CD8-positive, alpha-beta T cell (primary cell): ENCODE measurements at regions of chr19 and their contacts with region 1.

Region 1: DNA sequence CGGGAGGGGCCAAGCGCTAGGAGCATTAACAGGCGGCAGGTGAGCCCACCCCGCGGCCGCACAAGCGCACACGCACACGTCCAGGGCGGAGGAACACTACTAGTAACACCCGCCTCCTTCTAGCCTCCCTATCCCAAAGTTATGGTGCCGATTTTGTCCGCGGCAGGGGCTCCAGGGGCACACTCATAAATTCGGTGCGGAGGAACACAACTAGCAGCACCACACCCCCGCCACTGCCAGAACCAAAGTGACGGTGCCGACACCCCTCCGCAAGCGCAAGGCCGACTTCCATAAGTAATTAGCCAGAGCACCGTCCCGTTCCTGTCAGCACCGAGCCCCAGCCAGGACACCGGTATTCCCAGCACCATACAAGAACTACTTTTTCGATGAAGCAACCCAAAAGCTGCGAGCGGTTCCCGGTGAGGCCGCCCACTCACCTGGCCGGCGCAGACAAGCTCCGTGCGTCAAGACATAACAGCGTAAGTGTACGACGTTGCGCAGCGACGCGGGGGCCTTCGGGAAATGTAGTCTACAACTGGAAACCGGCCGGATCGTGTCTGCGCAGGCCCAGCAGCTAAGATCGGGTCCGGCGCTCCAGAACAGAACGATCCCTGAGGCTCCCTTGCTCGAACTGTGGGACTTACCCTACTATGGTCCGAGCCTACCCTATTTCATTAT is at the starts of genes ZNF540 and ZNF571:
- DNase-seq: peak; percentile 83 to 96 (median 93)
- ATAC-seq: peak; percentile 93
- H3K4me3 ChIP-seq: peak within 1 kb of the TSS; percentile 66 to 70
- H3K4me3 Mint-ChIP-seq: peak within 1 kb of the TSS; percentile 98
- H3K27ac ChIP-seq: peak within 1 kb of the TSS; percentile 84 to 97
- H3K27ac Mint-ChIP-seq: peak within 1 kb of the TSS; percentile 99
- H3K4me1 ChIP-seq: peaks cover 10% of the 10 kb centered on the region
- H3K4me1 Mint-ChIP-seq: peaks cover 31% of the 10 kb centered on the region
- H3K27me3 ChIP-seq: no peaks in the 10 kb centered on the region
- H3K27me3 Mint-ChIP-seq: no peaks in the 10 kb centered on the region
- CTCF ChIP-seq: no peak
- total RNA-seq, gene ZNF540: 17.8 to 20.1 TPM
- total RNA-seq, gene ZNF571: 30.5 to 30.8 TPM

Region 2: DNA sequence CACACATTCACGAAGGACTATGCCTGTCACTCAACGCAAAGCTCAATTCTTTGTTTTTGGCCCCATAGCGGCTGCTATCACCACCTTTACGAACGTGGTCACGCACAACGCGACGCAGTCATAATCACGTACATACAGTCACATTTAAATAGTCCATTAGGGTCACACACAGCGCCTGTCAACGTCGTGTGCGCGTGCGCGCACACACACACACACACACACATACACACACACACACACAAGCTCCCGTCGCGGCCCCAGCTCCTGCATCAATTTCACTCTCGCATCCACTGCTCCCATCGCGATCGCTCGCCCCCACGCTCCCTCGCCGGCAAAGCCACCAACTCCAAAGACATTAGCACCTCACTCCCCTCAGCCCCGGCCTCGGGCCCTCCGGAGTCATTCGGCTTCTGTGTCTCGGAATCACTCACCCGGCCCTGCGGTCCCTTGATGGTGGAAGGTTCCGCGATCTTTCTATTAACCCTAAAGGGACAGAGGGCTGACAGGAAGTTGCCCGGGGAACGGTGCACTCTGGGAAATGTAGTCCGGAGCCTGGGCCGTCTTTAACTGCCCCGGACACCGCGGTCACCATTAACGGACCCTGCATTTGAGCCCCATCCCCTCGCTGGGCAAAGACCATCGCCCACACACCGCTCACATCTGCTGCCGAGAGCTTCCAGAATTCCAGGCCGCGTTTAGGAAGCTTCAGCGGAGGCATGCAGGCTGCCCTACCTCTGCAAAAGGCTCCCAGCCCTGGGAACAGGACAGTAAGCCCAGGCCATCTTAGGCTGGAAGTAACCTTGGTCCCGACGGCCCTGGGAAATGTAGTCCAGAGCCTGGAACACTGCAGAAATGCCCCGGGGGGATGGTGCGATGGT is 756.3 kb before region 1 on chr19 and contains the start of gene ZNF790:
- CTCF ChIA-PET with region 1: no interaction called
- POLR2A ChIA-PET with region 1: interaction called, 5 read pairs
- intact Hi-C with region 1: loop called in 1 of 2 experiments (anchors 5 kb)
- DNase-seq: peak; percentile 62 to 92 (median 81)
- ATAC-seq: peak; percentile 87
- H3K4me3 ChIP-seq: peak within 1 kb of the TSS; percentile 86 to 91
- H3K4me3 Mint-ChIP-seq: no peak within 1 kb of the TSS
- H3K27ac ChIP-seq: peak within 1 kb of the TSS; percentile 88 to 97
- H3K27ac Mint-ChIP-seq: no peak within 1 kb of the TSS
- H3K4me1 ChIP-seq: peaks cover 17% of the 10 kb centered on the region
- H3K4me1 Mint-ChIP-seq: peaks cover 21% of the 10 kb centered on the region
- H3K27me3 ChIP-seq: no peaks in the 10 kb centered on the region
- H3K27me3 Mint-ChIP-seq: no peaks in the 10 kb centered on the region
- CTCF ChIP-seq: no peak
- total RNA-seq, gene ZNF790: 2.1 to 3.6 TPM

Region 3: GRCh38 chr19:37309834-37310575 is 284.4 kb before region 1 on chr19:
- CTCF ChIA-PET with region 1: no interaction called
- POLR2A ChIA-PET with region 1: no interaction called
- intact Hi-C with region 1: loop called in 1 of 2 experiments (anchors 10 kb)
- DNase-seq: peak in 4 of 9 experiments; percentile 27 to 64 (median 45)
- ATAC-seq: no peak
- H3K4me3 ChIP-seq: no peak overlapping the region
- H3K4me3 Mint-ChIP-seq: no peak overlapping the region
- H3K27ac ChIP-seq: no peak overlapping the region
- H3K27ac Mint-ChIP-seq: no peak overlapping the region
- H3K4me1 ChIP-seq: no peaks in the 10 kb centered on the region
- H3K4me1 Mint-ChIP-seq: peaks cover 16% of the 10 kb centered on the region
- H3K27me3 ChIP-seq: no peaks in the 10 kb centered on the region
- H3K27me3 Mint-ChIP-seq: peaks cover 4% of the 10 kb centered on the region
- CTCF ChIP-seq: peak; percentile 53

Region 4: GRCh38 chr19:37370880-37371661 is 223.4 kb before region 1 on chr19 and contains the start of gene ZNF527:
- CTCF ChIA-PET with region 1: no interaction called
- POLR2A ChIA-PET with region 1: interaction called, 14 read pairs
- intact Hi-C with region 1: loop called (anchors 1 kb)
- DNase-seq: peak; percentile 94 to 98 (median 97)
- ATAC-seq: peak; percentile 92
- H3K4me3 ChIP-seq: peak within 1 kb of the TSS; percentile 80 to 95
- H3K4me3 Mint-ChIP-seq: peak within 1 kb of the TSS; percentile 99
- H3K27ac ChIP-seq: peak within 1 kb of the TSS; percentile 82 to 90
- H3K27ac Mint-ChIP-seq: peak within 1 kb of the TSS; percentile 96
- H3K4me1 ChIP-seq: peaks cover 7% of the 10 kb centered on the region
- H3K4me1 Mint-ChIP-seq: peaks cover 20% of the 10 kb centered on the region
- H3K27me3 ChIP-seq: no peaks in the 10 kb centered on the region
- H3K27me3 Mint-ChIP-seq: no peaks in the 10 kb centered on the region
- CTCF ChIP-seq: no peak
- total RNA-seq, gene ZNF527: 12.9 to 14.2 TPM

Region 5: DNA sequence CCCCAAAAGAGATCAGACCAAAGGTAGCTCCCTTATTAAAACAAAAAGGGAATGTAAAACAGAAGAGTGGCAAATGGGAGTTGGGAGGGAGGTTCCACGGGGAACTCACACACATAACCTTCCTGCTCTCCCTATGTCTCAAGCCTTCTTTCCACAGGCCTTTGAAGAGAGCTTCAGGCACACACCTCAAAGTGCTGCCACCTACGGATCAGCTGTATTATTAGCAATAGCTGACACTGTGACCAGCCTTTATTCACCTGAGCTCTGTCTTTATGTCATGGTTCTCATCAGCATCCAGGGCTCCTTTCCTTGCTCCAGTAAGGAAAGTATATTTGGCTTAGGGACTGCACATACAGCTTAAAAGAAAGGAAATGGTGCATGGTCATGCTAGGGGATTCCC is 11.1 kb before region 1 on chr19:
- CTCF ChIA-PET with region 1: interaction called, 3 read pairs
- POLR2A ChIA-PET with region 1: interaction called, 11 read pairs
- intact Hi-C with region 1: no loop called
- DNase-seq: no peak
- ATAC-seq: no peak
- H3K4me3 ChIP-seq: no peak overlapping the region
- H3K4me3 Mint-ChIP-seq: no peak overlapping the region
- H3K27ac ChIP-seq: no peak overlapping the region
- H3K27ac Mint-ChIP-seq: no peak overlapping the region
- H3K4me1 ChIP-seq: no peaks in the 10 kb centered on the region
- H3K4me1 Mint-ChIP-seq: no peaks in the 10 kb centered on the region
- H3K27me3 ChIP-seq: no peaks in the 10 kb centered on the region
- H3K27me3 Mint-ChIP-seq: no peaks in the 10 kb centered on the region
- CTCF ChIP-seq: no peak

Region 6: GRCh38 chr19:37635076-37636056 is 40.9 kb after region 1 on chr19:
- CTCF ChIA-PET with region 1: no interaction called
- POLR2A ChIA-PET with region 1: no interaction called
- intact Hi-C with region 1: no loop called
- DNase-seq: no peak
- ATAC-seq: no peak
- H3K4me3 ChIP-seq: no peak overlapping the region
- H3K4me3 Mint-ChIP-seq: no peak overlapping the region
- H3K27ac ChIP-seq: no peak overlapping the region
- H3K27ac Mint-ChIP-seq: no peak overlapping the region
- H3K4me1 ChIP-seq: no peaks in the 10 kb centered on the region
- H3K4me1 Mint-ChIP-seq: no peaks in the 10 kb centered on the region
- H3K27me3 ChIP-seq: no peaks in the 10 kb centered on the region
- H3K27me3 Mint-ChIP-seq: no peaks in the 10 kb centered on the region
- CTCF ChIP-seq: no peak

Region 7: GRCh38 chr19:37691881-37692504 is 97.5 kb after region 1 on chr19:
- CTCF ChIA-PET with region 1: no interaction called
- POLR2A ChIA-PET with region 1: interaction called, 13 read pairs
- intact Hi-C with region 1: loop called in 1 of 2 experiments (anchors 1 kb)
- DNase-seq: peak; percentile 54 to 90 (median 80)
- ATAC-seq: peak; percentile 92
- H3K4me3 ChIP-seq: peak overlapping the region; percentile 58 to 73
- H3K4me3 Mint-ChIP-seq: peak overlapping the region; percentile 96
- H3K27ac ChIP-seq: peak overlapping the region; percentile 65 to 74
- H3K27ac Mint-ChIP-seq: peak overlapping the region; percentile 96
- H3K4me1 ChIP-seq: no peaks in the 10 kb centered on the region
- H3K4me1 Mint-ChIP-seq: peaks cover 13% of the 10 kb centered on the region
- H3K27me3 ChIP-seq: no peaks in the 10 kb centered on the region
- H3K27me3 Mint-ChIP-seq: no peaks in the 10 kb centered on the region
- CTCF ChIP-seq: no peak

Region 8: DNA sequence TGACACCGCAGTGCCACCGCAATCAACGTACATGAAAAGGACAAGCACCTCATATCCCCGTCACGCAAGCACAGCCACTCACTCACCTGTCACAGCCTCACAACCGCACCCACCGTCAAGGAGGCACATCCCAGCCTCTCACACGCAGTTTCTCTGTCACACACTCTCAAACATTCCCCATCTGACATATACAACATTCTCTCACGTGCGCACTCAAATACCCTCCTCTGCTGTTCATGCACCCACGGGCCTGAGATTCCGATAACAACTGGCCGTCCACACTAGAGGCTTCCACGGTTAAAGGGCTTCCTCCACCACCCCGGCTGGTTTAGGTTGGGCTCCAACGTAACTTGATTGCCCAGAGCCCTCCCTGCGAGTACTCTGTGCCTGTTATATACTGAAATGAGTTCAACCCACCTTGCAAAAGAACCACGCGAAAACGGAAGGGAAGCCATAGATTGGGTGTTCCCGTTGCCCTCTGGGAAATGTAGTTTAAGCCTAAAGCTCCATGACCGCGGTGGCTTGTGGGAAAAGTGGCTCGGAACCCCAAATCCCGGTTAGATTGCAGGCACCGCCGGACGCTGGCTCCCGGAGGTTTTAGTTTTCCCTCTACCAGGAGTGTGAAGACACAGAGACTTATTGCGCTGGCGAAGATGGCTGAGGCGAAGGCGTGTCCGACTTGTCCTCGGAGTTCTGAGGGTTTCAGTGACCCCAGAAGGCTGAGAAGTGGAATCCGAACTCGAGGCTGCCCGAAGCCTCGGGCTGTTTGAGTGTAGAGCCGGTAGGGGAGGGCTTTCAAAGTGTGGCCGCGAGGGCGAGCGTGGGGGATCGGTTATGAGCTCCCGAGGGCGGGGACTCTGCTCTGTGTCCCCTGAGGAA is 184.9 kb after region 1 on chr19 and contains the start of gene ZNF573:
- CTCF ChIA-PET with region 1: no interaction called
- POLR2A ChIA-PET with region 1: interaction called, 8 read pairs
- intact Hi-C with region 1: loop called (anchors 1 kb)
- DNase-seq: peak; percentile 66 to 99 (median 82)
- ATAC-seq: peak; percentile 84
- H3K4me3 ChIP-seq: peak within 1 kb of the TSS; percentile 67 to 70
- H3K4me3 Mint-ChIP-seq: peak within 1 kb of the TSS; percentile 97
- H3K27ac ChIP-seq: peak within 1 kb of the TSS; percentile 96 to 98
- H3K27ac Mint-ChIP-seq: peak within 1 kb of the TSS; percentile 91
- H3K4me1 ChIP-seq: peaks cover 12% of the 10 kb centered on the region
- H3K4me1 Mint-ChIP-seq: peaks cover 46% of the 10 kb centered on the region
- H3K27me3 ChIP-seq: no peaks in the 10 kb centered on the region
- H3K27me3 Mint-ChIP-seq: no peaks in the 10 kb centered on the region
- CTCF ChIP-seq: no peak
- total RNA-seq, gene ZNF573: 3.9 to 5.8 TPM

Region 9: DNA sequence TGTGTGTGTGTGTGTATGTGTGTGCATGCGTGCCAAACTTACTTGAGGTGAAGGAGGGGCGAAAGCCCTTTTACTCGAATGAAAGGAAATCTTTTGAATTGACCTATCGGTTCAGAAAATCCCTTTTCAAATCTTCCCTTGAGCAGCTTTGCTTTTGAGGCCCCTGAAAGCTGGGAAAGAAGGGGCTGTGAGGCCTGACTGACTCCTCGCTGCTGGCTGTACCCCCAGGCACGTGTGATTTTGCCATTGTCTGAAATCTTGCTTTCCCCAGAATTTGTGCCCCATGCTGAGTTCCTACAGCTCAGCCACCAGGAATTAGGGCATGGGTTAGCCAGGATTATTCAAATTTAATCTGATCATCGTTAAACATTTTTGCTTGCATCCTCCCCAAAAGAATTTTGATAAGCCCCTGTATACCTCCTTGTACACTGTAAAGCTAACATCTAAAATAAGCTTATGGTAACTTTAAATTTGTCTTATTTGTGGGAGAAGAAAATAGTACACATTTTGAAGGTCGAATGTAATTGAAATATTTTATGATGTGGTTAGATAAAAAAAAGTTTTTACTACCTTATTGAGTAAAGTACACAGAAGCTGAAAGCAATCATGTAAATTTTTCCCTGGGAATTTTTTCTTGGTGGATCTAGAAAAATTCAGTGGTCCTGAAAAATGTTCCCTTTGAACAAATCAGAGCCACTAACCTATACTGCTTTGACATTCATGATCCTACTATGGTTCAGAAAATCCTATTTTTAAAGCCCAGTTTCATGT is 359.3 kb after region 1 on chr19:
- CTCF ChIA-PET with region 1: no interaction called
- POLR2A ChIA-PET with region 1: no interaction called
- intact Hi-C with region 1: no loop called
- DNase-seq: no peak
- ATAC-seq: no peak
- H3K4me3 ChIP-seq: no peak overlapping the region
- H3K4me3 Mint-ChIP-seq: no peak overlapping the region
- H3K27ac ChIP-seq: no peak overlapping the region
- H3K27ac Mint-ChIP-seq: no peak overlapping the region
- H3K4me1 ChIP-seq: no peaks in the 10 kb centered on the region
- H3K4me1 Mint-ChIP-seq: no peaks in the 10 kb centered on the region
- H3K27me3 ChIP-seq: no peaks in the 10 kb centered on the region
- H3K27me3 Mint-ChIP-seq: no peaks in the 10 kb centered on the region
- CTCF ChIP-seq: no peak

Region 10: GRCh38 chr19:38559428-38560401 is 965.3 kb after region 1 on chr19:
- CTCF ChIA-PET with region 1: no interaction called
- POLR2A ChIA-PET with region 1: no interaction called
- intact Hi-C with region 1: no loop called
- DNase-seq: peak in 7 of 9 experiments; percentile 21 to 80 (median 47)
- ATAC-seq: peak; percentile 79
- H3K4me3 ChIP-seq: peak overlapping the region in 1 of 2 experiments; percentile 8
- H3K4me3 Mint-ChIP-seq: peak overlapping the region; percentile 53
- H3K27ac ChIP-seq: peak overlapping the region in 1 of 2 experiments; percentile 19
- H3K27ac Mint-ChIP-seq: peak overlapping the region; percentile 87
- H3K4me1 ChIP-seq: no peaks in the 10 kb centered on the region
- H3K4me1 Mint-ChIP-seq: peaks cover 46% of the 10 kb centered on the region
- H3K27me3 ChIP-seq: peaks cover 0 to 1% of the 10 kb centered on the region in 2 experiments
- H3K27me3 Mint-ChIP-seq: peaks cover 5% of the 10 kb centered on the region
- CTCF ChIP-seq: no peak